Activated CD4-positive, alpha-beta memory T cell treated with anti-CD3 and anti-CD28 coated beads, Interleukin-2, amount 10 ng/mL, durations not matched to agents 7 days and 5 days (primary cell): ENCODE measurements at regions of chr7 and their contacts with region 1.

Region 1: DNA sequence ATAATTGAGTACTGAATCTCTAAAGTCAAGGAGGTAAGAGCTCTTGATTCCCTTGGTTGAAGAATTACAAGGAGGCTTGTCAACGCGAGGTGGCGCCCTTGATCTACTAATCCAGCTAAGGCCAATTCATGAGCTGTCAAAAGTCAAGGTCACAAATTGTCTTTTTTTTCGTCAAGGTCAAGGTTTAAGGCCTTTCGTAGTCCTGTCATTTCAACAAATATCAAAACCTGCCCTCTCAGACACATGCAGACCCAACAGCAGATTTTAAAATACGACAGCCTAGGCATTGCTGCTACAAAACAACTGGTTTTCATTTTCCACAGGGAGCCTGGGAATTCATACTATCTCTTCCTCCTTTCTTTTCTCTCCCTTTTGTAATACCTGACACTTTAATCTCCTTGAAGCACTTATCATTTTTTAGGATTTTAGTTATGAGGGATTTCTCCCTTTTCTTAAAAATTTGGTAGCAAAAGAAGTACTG is 3.6 kb downstream of the HOXA13 start:
- DNase-seq: peak; percentile 81
- H3K4me3 Mint-ChIP-seq: no peak overlapping the region
- H3K27ac Mint-ChIP-seq: no peak overlapping the region
- H3K4me1 Mint-ChIP-seq: peaks cover 28% of the 10 kb centered on the region
- H3K27me3 Mint-ChIP-seq: peaks cover 82% of the 10 kb centered on the region

Region 2: GRCh38 chr7:27179503-27180430 is 16.6 kb before region 1 on chr7:
- CTCF ChIA-PET with region 1: interaction called, 26 read pairs
- POLR2A ChIA-PET with region 1: no interaction called
- DNase-seq: peak; percentile 56
- H3K4me3 Mint-ChIP-seq: no peak overlapping the region
- H3K27ac Mint-ChIP-seq: no peak overlapping the region
- H3K4me1 Mint-ChIP-seq: peaks cover 7% of the 10 kb centered on the region
- H3K27me3 Mint-ChIP-seq: peaks cover 69% of the 10 kb centered on the region

Region 3: GRCh38 chr7:27303026-27303425 is 106.7 kb after region 1 on chr7:
- CTCF ChIA-PET with region 1: no interaction called
- POLR2A ChIA-PET with region 1: no interaction called
- DNase-seq: no peak
- H3K4me3 Mint-ChIP-seq: no peak overlapping the region
- H3K27ac Mint-ChIP-seq: no peak overlapping the region
- H3K4me1 Mint-ChIP-seq: no peaks in the 10 kb centered on the region
- H3K27me3 Mint-ChIP-seq: no peaks in the 10 kb centered on the region

Region 4: GRCh38 chr7:27605689-27606269 is 409.5 kb after region 1 on chr7:
- CTCF ChIA-PET with region 1: interaction called, 12 read pairs
- POLR2A ChIA-PET with region 1: no interaction called
- DNase-seq: no peak
- H3K4me3 Mint-ChIP-seq: no peak overlapping the region
- H3K27ac Mint-ChIP-seq: no peak overlapping the region
- H3K4me1 Mint-ChIP-seq: no peaks in the 10 kb centered on the region
- H3K27me3 Mint-ChIP-seq: no peaks in the 10 kb centered on the region

Region 5: DNA sequence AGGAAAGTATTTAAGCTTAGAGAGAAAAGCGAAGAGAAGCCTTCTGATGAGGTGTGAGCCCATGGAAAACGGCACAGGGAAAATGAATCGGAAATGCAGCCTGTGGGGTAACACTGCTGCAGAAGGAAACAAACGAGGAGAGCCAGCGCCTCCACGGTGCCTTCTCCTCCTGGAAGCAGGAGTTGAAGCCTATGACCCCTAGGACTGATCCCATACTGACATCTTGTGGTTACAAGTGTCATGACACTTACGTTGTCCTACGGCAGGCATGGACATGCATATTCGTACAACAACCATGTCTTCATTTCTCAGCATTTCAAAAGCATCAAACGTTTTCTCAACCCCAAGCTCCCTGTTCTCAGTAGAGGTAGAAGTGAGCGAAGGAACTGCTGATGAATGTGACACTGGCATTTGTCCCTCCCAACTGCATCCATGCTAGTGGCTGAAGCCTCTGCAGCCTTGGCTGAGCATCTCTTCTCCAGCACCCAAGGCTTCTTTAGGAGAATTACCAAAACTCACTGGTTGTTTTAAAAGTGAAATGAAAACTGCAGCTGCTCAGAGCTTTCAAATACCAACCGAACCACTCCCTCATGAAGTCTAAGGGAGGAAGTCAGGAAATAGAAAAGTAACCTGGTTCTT is 824.1 kb after region 1 on chr7:
- CTCF ChIA-PET with region 1: interaction called, 13 read pairs
- POLR2A ChIA-PET with region 1: no interaction called
- DNase-seq: peak; percentile 31
- H3K4me3 Mint-ChIP-seq: no peak overlapping the region
- H3K27ac Mint-ChIP-seq: no peak overlapping the region
- H3K4me1 Mint-ChIP-seq: peaks cover 3% of the 10 kb centered on the region
- H3K27me3 Mint-ChIP-seq: no peaks in the 10 kb centered on the region

Region 6: GRCh38 chr7:28096713-28097112 is 900.4 kb after region 1 on chr7:
- CTCF ChIA-PET with region 1: interaction called, 10 read pairs
- POLR2A ChIA-PET with region 1: no interaction called
- DNase-seq: peak; percentile 19
- H3K4me3 Mint-ChIP-seq: no peak overlapping the region
- H3K27ac Mint-ChIP-seq: no peak overlapping the region
- H3K4me1 Mint-ChIP-seq: no peaks in the 10 kb centered on the region
- H3K27me3 Mint-ChIP-seq: no peaks in the 10 kb centered on the region